ENCODE measurements at regions of chr15 and their contacts with region 1.

Region 1: DNA sequence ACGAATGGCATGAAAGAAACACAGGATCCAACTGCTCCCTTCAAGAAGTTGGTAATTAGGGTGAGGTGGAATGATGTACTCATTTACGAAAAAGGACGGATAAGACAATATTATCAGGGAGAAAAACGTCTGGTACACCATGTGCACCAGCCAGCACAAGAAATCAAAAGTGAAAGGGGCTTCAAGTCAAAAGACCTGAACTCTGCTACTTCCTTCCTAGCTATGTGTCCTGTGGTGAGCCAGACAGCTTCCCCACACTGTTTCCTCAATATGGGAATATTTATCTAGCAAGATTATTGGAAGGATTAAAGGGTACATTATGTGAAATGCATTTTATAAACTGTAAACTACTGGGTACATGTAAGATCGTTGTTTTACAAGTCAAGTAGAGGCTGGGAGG is 33.9 kb downstream of the RAB27A start:
- DNase-seq: peak in 2 of 5 donors; percentile 38 to 43
- H3K4me3 ChIP-seq: peak overlapping the region; percentile 63
- H3K4me3 Mint-ChIP-seq: peak overlapping the region; percentile 86 to 91 (median 89)
- H3K27ac ChIP-seq: peak overlapping the region; percentile 52
- H3K27ac Mint-ChIP-seq: peak overlapping the region; percentile 91 to 98 (median 96)
- H3K4me1 ChIP-seq: peaks cover 58% of the 10 kb centered on the region
- H3K4me1 Mint-ChIP-seq: peaks cover 78 to 91% (median 82%) of the 10 kb centered on the region in 3 donors
- H3K27me3 ChIP-seq: no peaks in the 10 kb centered on the region
- H3K27me3 Mint-ChIP-seq: no peaks in the 10 kb centered on the region

Region 2: DNA sequence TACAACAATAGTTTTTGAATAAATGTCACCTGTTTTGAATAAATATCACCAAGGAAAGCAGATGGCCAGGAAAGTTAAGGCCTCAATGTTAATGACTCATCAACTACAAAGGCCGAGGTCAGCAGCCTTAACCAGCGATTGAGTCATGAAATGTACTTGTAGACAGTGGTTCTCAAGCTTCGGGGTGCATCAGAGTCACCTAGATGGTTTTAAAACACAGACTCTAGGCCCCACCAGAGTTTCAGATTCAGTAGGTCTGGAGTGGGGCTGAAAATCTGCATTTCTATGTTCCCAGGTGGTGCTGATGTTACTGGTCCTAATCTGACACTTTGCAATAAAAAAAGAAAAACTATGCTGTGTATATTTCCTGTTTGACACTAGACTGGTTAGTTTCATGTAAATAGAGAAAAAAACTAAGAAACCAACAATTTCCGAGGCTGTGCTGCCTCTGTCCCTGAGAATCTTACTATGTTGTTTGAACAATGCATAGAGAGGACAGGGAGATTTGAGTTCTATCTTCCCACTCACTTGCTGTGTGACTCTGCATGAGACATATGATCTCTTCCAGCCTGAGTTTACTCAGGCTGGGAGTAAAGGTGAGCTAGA is 24.1 kb after region 1 on chr15:
- CTCF ChIA-PET with region 1: interaction called, 6 read pairs
- POLR2A ChIA-PET with region 1: interaction called, 10 read pairs
- DNase-seq: peak; percentile 32 to 82 (median 49)
- H3K4me3 ChIP-seq: peak overlapping the region; percentile 6
- H3K4me3 Mint-ChIP-seq: peak overlapping the region; percentile 61 to 83 (median 78)
- H3K27ac ChIP-seq: peak overlapping the region; percentile 57
- H3K27ac Mint-ChIP-seq: peak overlapping the region; percentile 94 to 99 (median 97)
- H3K4me1 ChIP-seq: peaks cover 90% of the 10 kb centered on the region
- H3K4me1 Mint-ChIP-seq: peaks cover 94 to 99% (median 99%) of the 10 kb centered on the region in 3 donors
- H3K27me3 ChIP-seq: no peaks in the 10 kb centered on the region
- H3K27me3 Mint-ChIP-seq: no peaks in the 10 kb centered on the region

Region 3: GRCh38 chr15:55290528-55291057 is 34.9 kb after region 1 on chr15:
- CTCF ChIA-PET with region 1: interaction called, 10 read pairs
- POLR2A ChIA-PET with region 1: interaction called, 7 read pairs
- DNase-seq: peak; percentile 75 to 90 (median 80)
- H3K4me3 ChIP-seq: peak overlapping the region; percentile 87
- H3K4me3 Mint-ChIP-seq: peak overlapping the region; percentile 92 to 99 (median 97)
- H3K27ac ChIP-seq: peak overlapping the region; percentile 91
- H3K27ac Mint-ChIP-seq: peak overlapping the region; percentile 94 to 99 (median 96)
- H3K4me1 ChIP-seq: peaks cover 16% of the 10 kb centered on the region
- H3K4me1 Mint-ChIP-seq: peaks cover 29 to 39% (median 39%) of the 10 kb centered on the region in 3 donors
- H3K27me3 ChIP-seq: no peaks in the 10 kb centered on the region
- H3K27me3 Mint-ChIP-seq: no peaks in the 10 kb centered on the region